Dorsolateral prefrontal cortex (tissue), 120 donors: ENCODE measurements at regions of chr17 and their contacts with region 1.

Region 1: DNA sequence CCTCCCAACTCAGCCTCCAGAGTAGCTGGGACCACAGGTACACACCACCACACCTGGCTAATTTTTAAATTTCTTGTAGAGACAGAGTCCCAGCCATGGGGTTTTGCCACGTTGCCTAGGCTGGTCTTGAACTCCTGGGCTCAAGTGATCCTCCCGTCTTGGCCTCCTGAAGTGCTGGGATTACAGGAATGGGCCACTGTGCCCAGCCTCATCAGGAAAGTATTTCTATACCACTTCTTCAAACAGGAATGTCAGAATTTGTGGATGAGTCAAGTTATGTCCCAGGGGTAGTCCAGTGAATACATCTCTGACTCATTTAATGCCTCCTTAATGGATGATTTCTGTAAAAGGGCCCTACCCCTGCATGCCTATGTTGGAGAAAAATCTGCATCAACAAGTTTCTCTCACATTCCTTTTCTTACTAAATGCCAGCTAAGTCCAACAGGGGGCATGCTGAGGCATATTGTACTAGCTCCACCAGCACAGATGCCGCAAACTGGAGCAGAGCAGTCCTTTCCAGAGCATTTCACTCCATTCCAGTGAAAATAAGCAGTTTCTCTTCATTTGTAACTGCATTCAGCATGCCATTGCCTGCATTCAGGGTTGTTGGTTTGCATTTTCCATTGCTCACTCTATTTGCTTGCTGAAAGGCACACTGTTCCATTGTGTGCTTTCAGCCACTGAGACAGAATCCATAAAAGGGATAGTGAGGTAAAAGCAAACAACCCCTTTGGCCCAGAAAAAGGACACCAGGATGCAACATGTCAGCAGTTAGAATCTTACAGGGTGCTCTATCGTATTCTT is 5.3 kb upstream of the CAVIN1 start:
- DNase-seq: peak in 6 of 10 donors; percentile 51 to 80 (median 62)
- H3K4me3 ChIP-seq: peak overlapping the region in 13 of 59 donors; percentile 0 to 38 (median 27)
- H3K27ac ChIP-seq: peak overlapping the region; percentile 25 to 97 (median 77)
- H3K27me3 ChIP-seq: peaks cover 0 to under 1% (median 0%) of the 10 kb centered on the region in 45 donors
- CTCF ChIP-seq: peak; percentile 38 to 80 (median 69)

Region 2: GRCh38 chr17:42347198-42347597 is 81.1 kb before region 1 on chr17:
- intact Hi-C with region 1: no loop called
- DNase-seq: peak in 1 of 10 donors; percentile 37
- H3K4me3 ChIP-seq: no peak overlapping the region
- H3K27ac ChIP-seq: peak overlapping the region in 4 of 59 donors; percentile 10 to 83 (median 18)
- H3K27me3 ChIP-seq: no peaks in the 10 kb centered on the region
- CTCF ChIP-seq: no peak

Region 3: GRCh38 chr17:42484304-42484703 is 56.0 kb after region 1 on chr17:
- intact Hi-C with region 1: no loop called
- DNase-seq: no peak
- H3K4me3 ChIP-seq: no peak overlapping the region
- H3K27ac ChIP-seq: peak overlapping the region in 3 of 59 donors; percentile 3 to 36 (median 4)
- H3K27me3 ChIP-seq: no peaks in the 10 kb centered on the region
- CTCF ChIP-seq: no peak

Region 4: GRCh38 chr17:42527273-42527703 is 98.9 kb after region 1 on chr17:
- intact Hi-C with region 1: loop called (anchors 5 kb)
- DNase-seq: peak in 6 of 10 donors; percentile 30 to 73 (median 60)
- H3K4me3 ChIP-seq: no peak overlapping the region
- H3K27ac ChIP-seq: peak overlapping the region in 45 of 59 donors; percentile 0 to 86 (median 60)
- H3K27me3 ChIP-seq: no peaks in the 10 kb centered on the region
- CTCF ChIP-seq: peak; percentile 53 to 84 (median 74)